Posterior cingulate gyrus (tissue), 11 donors: ENCODE measurements at regions of chr19 and their contacts with region 1.

Region 1: DNA sequence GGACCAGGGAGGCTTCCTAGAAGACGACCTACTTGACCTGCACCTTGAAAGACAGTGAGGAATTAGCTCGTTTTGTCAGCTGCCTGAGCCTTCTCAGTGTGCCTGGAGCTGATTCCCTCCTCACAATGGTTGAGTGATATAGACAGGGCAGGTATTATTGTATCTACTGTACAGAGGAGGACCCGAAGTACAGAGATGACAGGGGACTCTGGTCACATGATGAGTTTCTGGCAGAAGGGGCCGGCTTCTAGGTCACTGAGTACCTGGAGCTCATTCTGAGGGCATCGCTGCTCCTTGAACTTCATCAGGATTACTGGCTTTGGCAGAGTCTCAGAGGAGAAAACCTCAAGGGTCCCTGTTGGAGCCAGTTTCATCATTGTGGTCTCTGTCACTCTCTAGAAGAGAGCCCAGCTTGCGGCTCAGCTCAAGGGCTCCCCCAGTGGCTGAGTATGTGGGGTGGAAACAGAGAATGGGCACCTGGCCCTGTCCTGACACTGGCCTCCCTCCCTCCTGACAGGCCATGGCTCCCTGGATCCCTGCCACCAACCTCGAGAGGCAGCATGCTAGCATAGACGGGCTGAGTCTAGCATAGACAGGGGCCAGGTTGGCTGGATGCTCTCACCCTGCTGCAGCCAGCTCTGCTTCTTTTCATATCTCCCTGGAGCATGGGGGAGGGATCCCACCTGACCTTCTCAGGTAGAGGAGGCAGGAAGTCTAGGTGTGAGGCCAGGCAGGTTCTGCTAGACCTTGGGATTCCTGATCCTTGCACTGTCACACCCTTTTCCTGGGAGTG is 38.7 kb downstream of the NFIX start:
- DNase-seq: peak in 9 of 10 donors; percentile 59 to 95 (median 77)

Region 2: DNA sequence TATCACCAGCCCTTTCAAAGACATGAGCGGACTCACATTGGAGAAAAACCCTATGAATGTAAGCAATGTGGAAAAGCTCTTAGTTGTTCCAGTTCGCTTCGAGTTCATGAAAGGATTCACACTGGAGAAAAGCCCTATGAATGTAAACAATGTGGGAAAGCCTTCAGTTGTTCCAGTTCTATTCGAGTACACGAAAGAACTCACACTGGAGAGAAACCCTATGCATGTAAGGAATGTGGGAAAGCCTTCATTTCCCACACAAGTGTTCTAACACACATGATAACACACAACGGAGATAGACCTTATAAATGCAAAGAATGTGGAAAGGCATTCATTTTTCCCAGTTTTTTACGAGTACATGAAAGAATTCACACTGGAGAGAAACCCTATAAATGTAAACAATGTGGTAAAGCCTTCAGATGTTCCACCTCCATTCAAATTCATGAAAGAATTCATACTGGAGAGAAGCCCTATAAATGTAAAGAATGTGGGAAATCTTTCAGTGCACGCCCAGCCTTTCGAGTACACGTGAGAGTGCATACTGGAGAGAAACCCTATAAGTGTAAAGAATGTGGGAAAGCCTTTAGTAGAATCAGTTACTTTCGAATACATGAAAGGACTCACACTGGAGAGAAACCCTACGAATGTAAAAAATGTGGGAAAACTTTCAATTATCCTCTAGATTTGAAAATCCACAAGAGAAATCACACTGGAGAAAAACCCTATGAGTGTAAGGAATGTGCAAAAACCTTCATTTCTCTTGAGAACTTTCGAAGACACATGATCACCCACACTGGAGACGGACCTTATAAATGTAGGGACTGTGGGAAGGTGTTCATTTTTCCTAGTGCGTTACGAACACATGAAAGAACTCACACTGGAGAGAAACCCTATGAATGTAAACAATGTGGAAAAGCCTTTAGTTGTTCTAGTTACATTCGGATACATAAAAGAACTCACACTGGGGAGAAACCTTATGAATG is 405.7 kb before region 1 on chr19:
- intact Hi-C with region 1: no loop called
- DNase-seq: no peak

Region 3: DNA sequence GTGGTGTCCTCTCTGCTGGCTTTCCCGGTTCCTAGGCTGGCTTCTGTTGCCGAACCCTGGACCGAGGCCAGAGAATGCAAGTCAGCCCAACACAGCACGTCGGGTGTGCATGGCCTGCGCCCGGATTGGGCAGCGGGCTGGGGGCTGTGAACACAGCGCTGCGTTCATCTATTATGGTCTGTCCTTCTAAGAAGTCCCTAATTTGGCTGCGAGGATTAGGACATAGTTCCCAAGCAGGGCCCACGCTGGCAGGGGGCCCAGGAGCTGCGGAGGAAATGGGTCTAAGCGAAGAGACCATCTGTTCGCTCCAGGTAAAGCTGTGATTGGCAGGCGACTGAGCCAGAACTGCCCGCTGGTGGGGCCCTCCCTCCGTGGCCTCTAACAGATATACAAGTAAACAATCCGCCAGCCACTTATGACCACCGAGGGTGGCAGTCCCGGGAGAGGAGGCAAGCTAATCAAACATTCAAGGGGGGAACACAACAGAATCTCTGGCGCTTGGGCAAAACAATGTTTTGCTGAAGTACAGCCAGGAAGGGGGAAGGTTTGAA is 120.9 kb before region 1 on chr19:
- intact Hi-C with region 1: no loop called
- DNase-seq: peak; percentile 49 to 96 (median 79)

Region 4: GRCh38 chr19:12983542-12984142 is 50.4 kb before region 1 on chr19:
- intact Hi-C with region 1: loop called (anchors 5 kb)
- DNase-seq: peak; percentile 68 to 97 (median 80)

Region 5: GRCh38 chr19:13002166-13002898 is 31.7 kb before region 1 on chr19:
- intact Hi-C with region 1: loop called (anchors 2 kb)
- DNase-seq: peak; percentile 84 to 99 (median 91)

Region 6: GRCh38 chr19:13060964-13061927 is 27.2 kb after region 1 on chr19:
- intact Hi-C with region 1: loop called (anchors 2 kb)
- DNase-seq: peak; percentile 71 to 98 (median 90)

Region 7: GRCh38 chr19:13093407-13094105 is 59.5 kb after region 1 on chr19:
- intact Hi-C with region 1: loop called (anchors 5 kb)
- DNase-seq: peak; percentile 76 to 98 (median 86)